ENCODE measurements at regions of chr2 and their contacts with region 1.

Region 1: DNA sequence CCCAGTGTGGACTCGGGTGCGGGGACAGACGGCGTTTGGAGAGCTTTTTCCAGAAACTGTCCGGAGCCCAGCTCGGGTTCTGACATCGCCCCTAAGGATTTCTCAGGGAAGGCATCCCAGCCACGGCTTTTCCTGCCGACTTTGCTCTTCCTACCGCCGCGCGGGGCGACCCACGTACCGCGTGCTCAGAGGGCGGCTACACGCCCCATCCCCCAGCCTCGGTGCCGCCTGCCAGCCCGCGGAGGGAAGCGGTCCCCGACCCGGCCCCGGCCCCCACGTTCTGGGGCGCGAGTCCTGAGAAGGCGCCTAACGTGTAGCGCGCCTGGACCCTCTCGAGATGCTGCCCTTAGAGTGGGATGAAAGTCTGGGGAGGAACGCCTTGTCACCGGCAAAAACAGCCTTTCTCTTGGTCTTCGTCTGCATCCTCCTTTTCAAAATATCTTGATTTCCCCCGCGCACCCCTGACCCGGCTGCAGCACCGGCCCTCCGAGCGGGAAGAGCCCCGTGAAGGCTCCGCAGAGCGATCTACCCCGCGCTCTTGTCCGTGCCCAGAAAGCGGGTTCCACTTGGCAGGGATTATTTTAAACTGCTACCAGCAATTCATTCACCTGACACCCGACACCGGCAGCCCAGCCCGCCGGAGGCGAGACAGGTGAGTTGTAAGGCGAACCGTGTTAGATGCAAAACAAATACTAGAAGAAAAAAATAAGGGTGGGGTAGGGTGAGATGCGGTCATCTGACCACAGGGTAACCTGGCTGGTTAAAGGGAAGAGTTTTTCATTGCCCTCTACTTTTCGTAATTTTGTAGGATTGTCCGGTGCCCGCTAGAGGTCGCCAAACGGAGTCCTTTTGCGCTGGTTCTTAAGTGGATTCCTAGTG is 812 bp upstream of the KCNG3 start:
- DNase-seq: peak; percentile 92
- H3K4me3 Mint-ChIP-seq: peak overlapping the region; percentile 86
- H3K27ac Mint-ChIP-seq: peak overlapping the region; percentile 76
- H3K4me1 Mint-ChIP-seq: peaks cover 10% of the 10 kb centered on the region
- H3K27me3 Mint-ChIP-seq: peaks cover 37% of the 10 kb centered on the region

Region 2: GRCh38 chr2:42568401-42569115 is 74.0 kb after region 1 on chr2 and contains the start of gene MTA3:
- intact Hi-C with region 1: loop called (anchors 5 kb)
- DNase-seq: peak; percentile 91
- H3K4me3 Mint-ChIP-seq: peak within 1 kb of the TSS; percentile 91
- H3K27ac Mint-ChIP-seq: peak within 1 kb of the TSS; percentile 94
- H3K4me1 Mint-ChIP-seq: peaks cover 23% of the 10 kb centered on the region
- H3K27me3 Mint-ChIP-seq: no peaks in the 10 kb centered on the region
- total RNA-seq, gene MTA3: 31.7 and 36.6 TPM in 2 replicates

Region 3: GRCh38 chr2:42578621-42579020 is 84.0 kb after region 1 on chr2:
- intact Hi-C with region 1: no loop called
- DNase-seq: no peak
- H3K4me3 Mint-ChIP-seq: no peak overlapping the region
- H3K27ac Mint-ChIP-seq: no peak overlapping the region
- H3K4me1 Mint-ChIP-seq: peaks cover 23% of the 10 kb centered on the region
- H3K27me3 Mint-ChIP-seq: no peaks in the 10 kb centered on the region

Region 4: GRCh38 chr2:42844901-42845821 is 350.6 kb after region 1 on chr2:
- intact Hi-C with region 1: no loop called
- DNase-seq: no peak
- H3K4me3 Mint-ChIP-seq: no peak overlapping the region
- H3K27ac Mint-ChIP-seq: no peak overlapping the region
- H3K4me1 Mint-ChIP-seq: no peaks in the 10 kb centered on the region
- H3K27me3 Mint-ChIP-seq: no peaks in the 10 kb centered on the region

Measured in activated CD4-positive, alpha-beta T cell treated with anti-CD3 and anti-CD28 coated beads, Interleukin-2, amount 10 ng/mL, durations not matched to agents 24 days and 14 days (primary cell).